B cell (primary cell): ENCODE measurements at regions of chr6 and their contacts with region 1.

Region 1: DNA sequence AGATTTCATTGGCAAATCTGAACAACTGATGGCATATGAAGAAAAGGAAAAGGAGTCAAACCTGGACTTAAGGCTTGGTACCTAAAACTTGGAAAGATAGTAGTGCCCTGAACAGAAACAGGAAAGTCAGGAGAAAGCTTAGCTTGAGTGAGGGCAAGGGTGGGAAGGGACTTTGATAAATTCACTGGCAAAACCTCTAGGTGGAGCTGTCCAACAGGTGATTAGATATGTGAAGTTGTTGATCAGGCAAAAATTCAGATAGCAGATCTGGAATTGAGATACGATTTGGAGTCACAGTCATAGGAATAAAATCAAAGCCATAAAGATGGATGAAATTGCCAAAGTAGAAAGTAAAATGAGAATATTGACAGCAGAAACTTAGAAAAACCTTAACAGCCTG is 16.1 kb upstream of the ZNF292 start:
- DNase-seq: peak; percentile 76
- ATAC-seq: peak; percentile 65
- H3K4me3 ChIP-seq: no peak overlapping the region
- H3K4me3 Mint-ChIP-seq: no peak overlapping the region
- H3K27ac ChIP-seq: no peak overlapping the region
- H3K27ac Mint-ChIP-seq: no peak overlapping the region
- H3K4me1 ChIP-seq: no peaks in the 10 kb centered on the region
- H3K4me1 Mint-ChIP-seq: peaks cover 1% of the 10 kb centered on the region
- H3K27me3 ChIP-seq: no peaks in the 10 kb centered on the region
- H3K27me3 Mint-ChIP-seq: no peaks in the 10 kb centered on the region
- CTCF ChIP-seq: peak; percentile 88

Region 2: DNA sequence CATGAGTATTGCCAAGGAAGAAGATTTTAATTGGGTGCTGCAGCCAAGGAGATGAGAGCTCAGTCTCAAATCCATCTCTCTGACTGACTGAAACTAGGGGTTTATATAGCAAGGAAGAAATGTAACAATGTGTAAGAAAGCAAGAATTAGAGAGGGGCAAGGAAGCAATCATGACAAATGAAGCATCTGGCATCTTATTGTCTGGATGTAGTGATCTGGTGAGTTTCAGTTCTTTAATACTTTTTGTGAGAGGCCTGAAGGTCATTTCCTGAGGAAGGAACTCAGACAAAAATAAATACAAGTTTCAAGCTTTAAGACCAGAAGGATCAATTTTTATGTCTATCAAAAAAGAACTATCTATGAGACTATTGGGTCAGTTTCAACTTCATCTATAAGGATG is 137.7 kb before region 1 on chr6:
- CTCF ChIA-PET with region 1: no interaction called
- POLR2A ChIA-PET with region 1: no interaction called
- intact Hi-C with region 1: no loop called
- DNase-seq: no peak
- ATAC-seq: no peak
- H3K4me3 ChIP-seq: no peak overlapping the region
- H3K4me3 Mint-ChIP-seq: peak overlapping the region; percentile 14
- H3K27ac ChIP-seq: peak overlapping the region in 1 of 2 donors; percentile 26
- H3K27ac Mint-ChIP-seq: peak overlapping the region; percentile 23
- H3K4me1 ChIP-seq: peaks cover 8 to 13% of the 10 kb centered on the region in 2 donors
- H3K4me1 Mint-ChIP-seq: peaks cover 22% of the 10 kb centered on the region
- H3K27me3 ChIP-seq: no peaks in the 10 kb centered on the region
- H3K27me3 Mint-ChIP-seq: peaks cover 4% of the 10 kb centered on the region
- CTCF ChIP-seq: no peak

Region 3: GRCh38 chr6:87237804-87238203 is 98.6 kb after region 1 on chr6:
- CTCF ChIA-PET with region 1: interaction called, 12 read pairs
- POLR2A ChIA-PET with region 1: no interaction called
- intact Hi-C with region 1: loop called (anchors 1 kb)
- DNase-seq: peak; percentile 39
- ATAC-seq: peak; percentile 49
- H3K4me3 ChIP-seq: no peak overlapping the region
- H3K4me3 Mint-ChIP-seq: no peak overlapping the region
- H3K27ac ChIP-seq: no peak overlapping the region
- H3K27ac Mint-ChIP-seq: no peak overlapping the region
- H3K4me1 ChIP-seq: no peaks in the 10 kb centered on the region
- H3K4me1 Mint-ChIP-seq: peaks cover 3% of the 10 kb centered on the region
- H3K27me3 ChIP-seq: no peaks in the 10 kb centered on the region
- H3K27me3 Mint-ChIP-seq: no peaks in the 10 kb centered on the region
- CTCF ChIP-seq: peak; percentile 52

Region 4: GRCh38 chr6:87393022-87393622 is 253.9 kb after region 1 on chr6:
- CTCF ChIA-PET with region 1: interaction called, 15 read pairs
- POLR2A ChIA-PET with region 1: no interaction called
- intact Hi-C with region 1: no loop called
- DNase-seq: peak; percentile 79
- ATAC-seq: peak; percentile 86
- H3K4me3 ChIP-seq: no peak overlapping the region
- H3K4me3 Mint-ChIP-seq: no peak overlapping the region
- H3K27ac ChIP-seq: no peak overlapping the region
- H3K27ac Mint-ChIP-seq: no peak overlapping the region
- H3K4me1 ChIP-seq: no peaks in the 10 kb centered on the region
- H3K4me1 Mint-ChIP-seq: peaks cover 5% of the 10 kb centered on the region
- H3K27me3 ChIP-seq: no peaks in the 10 kb centered on the region
- H3K27me3 Mint-ChIP-seq: no peaks in the 10 kb centered on the region
- CTCF ChIP-seq: peak; percentile 84

Region 5: GRCh38 chr6:87589693-87590549 is 450.7 kb after region 1 on chr6 and contains the starts of genes ORC3 and RARS2:
- CTCF ChIA-PET with region 1: no interaction called
- POLR2A ChIA-PET with region 1: no interaction called
- intact Hi-C with region 1: loop called (anchors 5 kb)
- DNase-seq: peak; percentile 94
- ATAC-seq: peak; percentile 99
- H3K4me3 ChIP-seq: peak within 1 kb of the TSS; percentile 74 to 100 (median 96)
- H3K4me3 Mint-ChIP-seq: peak within 1 kb of the TSS; percentile 96
- H3K27ac ChIP-seq: peak within 1 kb of the TSS; percentile 78 to 91
- H3K27ac Mint-ChIP-seq: peak within 1 kb of the TSS; percentile 88
- H3K4me1 ChIP-seq: peaks cover 27 to 28% of the 10 kb centered on the region in 2 donors
- H3K4me1 Mint-ChIP-seq: peaks cover 56% of the 10 kb centered on the region
- H3K27me3 ChIP-seq: no peaks in the 10 kb centered on the region
- H3K27me3 Mint-ChIP-seq: no peaks in the 10 kb centered on the region
- CTCF ChIP-seq: no peak
- total RNA-seq, gene ORC3: 27.8 and 31.2 TPM in 2 replicates
- total RNA-seq, gene RARS2: 37.9 and 38.7 TPM in 2 replicates

Region 6: GRCh38 chr6:88780714-88781389 is 1641.6 kb after region 1 on chr6:
- CTCF ChIA-PET with region 1: no interaction called
- POLR2A ChIA-PET with region 1: no interaction called
- intact Hi-C with region 1: loop called (anchors 1 kb)
- DNase-seq: peak; percentile 82
- ATAC-seq: peak; percentile 81
- H3K4me3 ChIP-seq: no peak overlapping the region
- H3K4me3 Mint-ChIP-seq: no peak overlapping the region
- H3K27ac ChIP-seq: no peak overlapping the region
- H3K27ac Mint-ChIP-seq: no peak overlapping the region
- H3K4me1 ChIP-seq: peaks cover 0 to 13% of the 10 kb centered on the region in 2 donors
- H3K4me1 Mint-ChIP-seq: peaks cover 16% of the 10 kb centered on the region
- H3K27me3 ChIP-seq: no peaks in the 10 kb centered on the region
- H3K27me3 Mint-ChIP-seq: no peaks in the 10 kb centered on the region
- CTCF ChIP-seq: peak; percentile 90